OCI-LY7 (cell line): ENCODE measurements at regions of chr20 and their contacts with region 1.

Region 1: GRCh38 chr20:19661717-19662636 is 96.1 kb upstream of the RIN2 start:
- DNase-seq: peak; percentile 63
- H3K4me3 ChIP-seq: no peak overlapping the region
- H3K27ac ChIP-seq: no peak overlapping the region
- H3K4me1 ChIP-seq: no peaks in the 10 kb centered on the region
- CTCF ChIP-seq: peak; percentile 95

Region 2: GRCh38 chr20:18632196-18633009 is 1029.6 kb before region 1 on chr20:
- CTCF ChIA-PET with region 1: no interaction called
- POLR2A ChIA-PET with region 1: no interaction called
- intact Hi-C with region 1: loop called (anchors 10 kb)
- DNase-seq: peak; percentile 71
- H3K4me3 ChIP-seq: no peak overlapping the region
- H3K27ac ChIP-seq: no peak overlapping the region
- H3K4me1 ChIP-seq: no peaks in the 10 kb centered on the region
- CTCF ChIP-seq: peak; percentile 98

Region 3: GRCh38 chr20:19205977-19206396 is 456.0 kb before region 1 on chr20:
- CTCF ChIA-PET with region 1: no interaction called
- POLR2A ChIA-PET with region 1: no interaction called
- intact Hi-C with region 1: loop called (anchors 1 kb)
- DNase-seq: peak; percentile 57
- H3K4me3 ChIP-seq: no peak overlapping the region
- H3K27ac ChIP-seq: no peak overlapping the region
- H3K4me1 ChIP-seq: no peaks in the 10 kb centered on the region
- CTCF ChIP-seq: peak; percentile 94

Region 4: DNA sequence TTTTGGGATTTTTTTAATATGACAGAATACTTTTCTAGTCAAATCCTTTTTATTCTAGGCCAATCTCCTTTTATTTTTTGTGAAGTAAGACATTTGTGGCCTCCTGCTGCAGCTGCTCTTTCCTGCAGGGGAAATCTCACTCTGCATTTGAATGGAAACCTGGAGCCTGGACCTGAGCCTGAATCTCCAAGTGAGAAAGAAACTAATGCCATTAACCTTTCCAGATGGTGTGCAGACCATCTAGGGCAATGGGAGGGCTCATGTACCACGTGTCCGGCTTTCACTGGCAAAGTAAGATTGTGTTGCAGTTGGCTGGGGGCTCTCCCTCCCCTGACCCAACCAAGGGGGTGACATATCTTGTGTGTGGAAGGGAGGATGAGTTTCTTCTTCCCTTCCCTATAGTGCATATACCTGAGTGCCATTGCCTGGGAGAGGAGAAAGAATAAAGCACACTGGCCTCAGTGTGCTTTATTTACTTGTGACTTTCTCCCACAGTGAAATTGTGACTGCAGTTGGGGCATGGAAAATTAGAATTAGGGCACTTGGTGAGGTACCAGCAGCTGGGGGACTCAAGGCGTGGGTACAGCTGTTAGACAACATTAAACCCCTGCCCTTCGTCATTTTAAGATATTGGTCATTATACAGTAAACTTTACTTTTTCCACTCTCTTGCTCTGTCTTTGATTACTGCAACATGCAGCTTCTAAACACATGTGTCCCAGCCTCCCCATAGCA is 63.7 kb before region 1 on chr20:
- CTCF ChIA-PET with region 1: no interaction called
- POLR2A ChIA-PET with region 1: no interaction called
- intact Hi-C with region 1: no loop called
- DNase-seq: no peak
- H3K4me3 ChIP-seq: no peak overlapping the region
- H3K27ac ChIP-seq: no peak overlapping the region
- H3K4me1 ChIP-seq: no peaks in the 10 kb centered on the region
- CTCF ChIP-seq: no peak

Region 5: DNA sequence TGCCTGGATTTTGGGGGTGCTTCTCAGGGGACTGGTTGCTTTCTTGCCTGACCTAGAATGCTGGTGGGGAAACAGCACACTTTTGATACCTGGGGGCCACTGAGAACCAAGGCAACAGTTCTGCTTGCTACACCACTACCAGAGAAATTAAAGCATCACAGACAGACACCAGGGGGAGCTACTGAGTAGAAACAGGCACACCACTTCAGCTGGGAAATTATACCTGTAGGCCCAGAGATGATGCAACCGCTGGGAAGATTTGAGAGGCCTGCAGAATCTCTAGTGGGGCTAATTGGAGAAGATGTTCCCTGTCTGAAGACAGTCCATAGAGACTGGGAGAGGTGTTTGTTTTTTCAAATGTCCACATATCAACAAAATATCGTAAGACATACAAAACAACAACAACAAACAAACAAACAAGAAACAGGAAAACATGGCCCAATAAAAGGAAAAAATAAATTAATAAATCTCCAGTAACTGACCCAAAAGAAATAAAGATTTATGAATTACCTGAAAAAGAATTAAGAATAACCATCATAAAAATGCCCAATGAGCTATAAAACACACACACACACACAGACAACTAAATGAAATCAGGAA is 33.3 kb before region 1 on chr20:
- CTCF ChIA-PET with region 1: interaction called, 6 read pairs
- POLR2A ChIA-PET with region 1: interaction called, 4 read pairs
- intact Hi-C with region 1: loop called (anchors 1 kb)
- DNase-seq: peak; percentile 65
- H3K4me3 ChIP-seq: no peak overlapping the region
- H3K27ac ChIP-seq: no peak overlapping the region
- H3K4me1 ChIP-seq: no peaks in the 10 kb centered on the region
- CTCF ChIP-seq: peak; percentile 83